ENCODE measurements at regions of chr6 and their contacts with region 1.

Region 1: GRCh38 chr6:33014841-33015634 is 5.6 kb upstream of the HLA-DOA start:
- DNase-seq: peak; percentile 89 to 95 (median 92)
- H3K4me3 ChIP-seq: peak overlapping the region in 1 of 7 experiments; percentile 26
- H3K27ac ChIP-seq: no peak overlapping the region
- H3K4me1 ChIP-seq: peaks cover 19 to 30% (median 28%) of the 10 kb centered on the region in 4 experiments
- H3K27me3 ChIP-seq: no peaks in the 10 kb centered on the region

Region 2: DNA sequence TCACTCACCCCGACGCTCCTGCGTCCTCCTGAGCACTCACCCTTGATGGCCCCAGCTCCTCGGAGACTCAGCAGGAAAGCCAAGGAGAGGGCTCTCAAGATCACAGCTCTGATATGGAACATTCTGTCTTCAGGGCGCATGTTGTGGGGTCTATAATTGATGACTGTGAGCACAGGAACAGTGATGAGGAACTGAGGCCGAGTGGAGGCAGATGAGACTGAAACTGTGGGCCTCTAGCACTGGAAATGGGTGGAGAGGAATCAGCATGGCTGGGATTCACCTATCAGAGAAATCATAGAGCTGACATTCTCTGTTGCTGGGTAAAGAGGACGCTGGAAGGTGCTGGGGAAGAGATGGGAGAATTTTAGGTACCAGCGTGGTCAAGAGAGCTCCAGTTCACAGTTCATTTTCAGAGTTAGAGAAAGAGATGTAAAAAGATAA is 58.4 kb after region 1 on chr6 and contains the start of gene HLA-DPA1:
- CTCF ChIA-PET with region 1: interaction called, 99 read pairs
- POLR2A ChIA-PET with region 1: interaction called, 3 read pairs
- DNase-seq: peak; percentile 59 to 80 (median 74)
- H3K4me3 ChIP-seq: peak within 1 kb of the TSS; percentile 30 to 88 (median 73)
- H3K27ac ChIP-seq: peak within 1 kb of the TSS; percentile 56 to 73
- H3K4me1 ChIP-seq: peaks cover 11 to 75% (median 50%) of the 10 kb centered on the region in 4 experiments
- H3K27me3 ChIP-seq: no peaks in the 10 kb centered on the region

Region 3: GRCh38 chr6:33082702-33083101 is 67.7 kb after region 1 on chr6:
- CTCF ChIA-PET with region 1: interaction called, 99 read pairs
- POLR2A ChIA-PET with region 1: interaction called, 3 read pairs
- DNase-seq: peak; percentile 57 to 74 (median 71)
- H3K4me3 ChIP-seq: no peak overlapping the region
- H3K27ac ChIP-seq: no peak overlapping the region
- H3K4me1 ChIP-seq: peaks cover 2 to 20% (median 15%) of the 10 kb centered on the region in 4 experiments
- H3K27me3 ChIP-seq: no peaks in the 10 kb centered on the region

Region 4: DNA sequence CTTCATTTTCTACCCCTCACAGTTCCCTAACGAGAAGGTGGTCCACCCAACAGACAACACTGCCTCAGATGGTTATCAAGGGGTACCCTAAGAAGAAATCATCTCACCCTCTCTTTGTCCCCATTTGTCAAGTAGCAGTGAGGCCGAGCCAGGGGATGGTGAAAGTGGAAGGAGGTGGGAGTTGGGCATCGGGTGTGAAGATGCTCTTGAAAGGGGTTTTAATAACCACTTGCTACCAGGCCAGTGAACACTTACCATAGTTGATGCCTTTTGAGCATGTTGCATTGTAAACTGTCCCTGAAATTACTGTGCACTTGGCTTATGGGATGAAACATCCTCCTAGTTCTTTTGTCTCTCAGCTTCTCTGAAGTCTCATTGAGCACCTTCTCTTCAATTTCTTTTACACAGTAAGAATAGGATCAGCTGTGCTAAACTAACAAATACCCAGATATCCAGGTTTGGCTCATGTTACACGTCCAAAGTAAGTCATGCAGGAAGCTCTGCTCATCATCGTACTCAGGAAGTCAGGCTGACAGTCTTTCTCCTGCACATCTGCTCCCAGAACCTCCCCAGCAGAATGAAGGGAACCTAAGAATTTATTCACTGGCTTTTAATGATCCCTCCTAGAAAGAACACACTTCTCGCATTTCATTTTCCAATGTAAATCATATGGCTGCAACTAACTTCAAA is 74.0 kb after region 1 on chr6:
- CTCF ChIA-PET with region 1: interaction called, 99 read pairs
- POLR2A ChIA-PET with region 1: no interaction called
- DNase-seq: no peak
- H3K4me3 ChIP-seq: no peak overlapping the region
- H3K27ac ChIP-seq: no peak overlapping the region
- H3K4me1 ChIP-seq: no peaks in the 10 kb centered on the region
- H3K27me3 ChIP-seq: no peaks in the 10 kb centered on the region

Region 5: DNA sequence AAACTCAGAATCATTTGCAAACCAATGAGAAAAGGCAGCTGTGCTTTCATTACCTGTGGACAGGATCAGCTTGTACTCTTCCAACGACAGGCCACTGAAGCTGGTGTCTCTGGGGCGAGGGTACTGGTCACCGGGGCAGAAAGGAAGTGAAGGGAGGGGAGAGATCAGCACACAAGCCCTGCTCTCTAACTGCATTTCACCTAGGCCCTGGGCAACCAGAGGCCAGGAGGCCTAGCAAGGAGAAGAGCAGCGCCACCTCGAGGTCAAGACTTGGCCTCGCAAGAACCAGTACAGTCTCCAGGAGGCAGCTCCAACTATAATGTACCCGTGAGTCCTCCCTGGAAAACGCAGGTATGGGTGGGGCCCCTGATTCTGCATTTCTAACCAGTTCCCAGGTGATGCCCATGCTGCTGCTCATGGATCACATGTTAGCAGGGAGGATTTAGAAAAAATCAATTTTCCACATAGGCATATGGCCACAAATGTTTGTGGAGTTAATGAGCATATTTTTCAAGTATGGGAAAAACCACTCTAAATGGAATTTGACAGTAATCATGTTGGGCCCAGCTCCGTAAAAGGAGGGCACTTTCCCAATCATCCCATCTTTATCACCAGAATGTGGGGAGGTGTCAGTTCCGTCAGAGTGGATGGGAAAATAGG is 685.5 kb after region 1 on chr6:
- CTCF ChIA-PET with region 1: no interaction called
- POLR2A ChIA-PET with region 1: no interaction called
- DNase-seq: peak; percentile 81 to 88 (median 86)
- H3K4me3 ChIP-seq: no peak overlapping the region
- H3K27ac ChIP-seq: peak overlapping the region in 1 of 2 experiments; percentile 0
- H3K4me1 ChIP-seq: peaks cover 0 to 50% (median 41%) of the 10 kb centered on the region in 4 experiments
- H3K27me3 ChIP-seq: no peaks in the 10 kb centered on the region